Breast epithelium (tissue), 4 donors: ENCODE measurements at regions of chr17 and their contacts with region 1.

Region 1: DNA sequence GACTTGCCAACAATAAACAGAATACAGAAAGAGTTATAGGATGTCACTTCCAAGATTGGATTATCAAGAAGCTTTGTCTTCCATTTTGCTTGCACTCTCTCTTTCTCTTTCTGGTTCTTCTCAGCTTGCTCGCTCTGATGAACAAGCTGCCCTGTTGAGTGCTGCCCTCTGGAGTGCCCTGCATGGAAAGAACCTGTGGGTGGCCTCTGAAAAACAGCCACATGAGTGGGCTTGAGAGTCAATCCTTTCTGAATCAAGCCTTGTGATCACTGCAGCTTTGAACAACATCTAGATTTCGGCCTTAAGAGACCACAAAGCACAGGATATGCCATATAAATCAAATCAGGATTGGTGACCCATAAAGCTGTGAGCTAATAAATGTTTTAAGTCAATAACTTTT is 185.1 kb downstream of the KIF2B start:
- DNase-seq: no peak
- H3K4me3 ChIP-seq: no peak overlapping the region
- H3K27ac ChIP-seq: no peak overlapping the region
- H3K4me1 ChIP-seq: no peaks in the 10 kb centered on the region
- H3K27me3 ChIP-seq: no peaks in the 10 kb centered on the region
- CTCF ChIP-seq: no peak
- POLR2A ChIP-seq: no peak

Region 2: DNA sequence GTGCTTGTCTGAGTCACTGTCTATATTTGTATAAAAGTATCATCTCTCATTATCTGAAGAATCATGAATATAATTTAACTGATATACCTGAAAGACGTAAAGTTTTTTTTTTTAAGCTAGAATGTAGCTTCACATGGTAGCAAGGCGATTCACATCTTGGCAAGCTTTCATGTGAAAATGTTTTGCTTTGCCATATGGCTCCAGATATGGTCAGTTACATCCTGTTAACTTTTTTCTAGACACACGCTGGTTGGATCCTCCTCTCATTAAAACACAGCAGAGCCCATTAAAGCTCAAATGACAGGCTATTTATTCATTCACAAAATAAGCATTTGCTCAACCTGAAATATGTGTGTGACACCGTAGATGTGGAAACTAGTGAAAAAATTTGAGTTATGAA is 227.7 kb after region 1 on chr17:
- intact Hi-C with region 1: loop called (anchors 5 kb)
- DNase-seq: no peak
- H3K4me3 ChIP-seq: no peak overlapping the region
- H3K27ac ChIP-seq: no peak overlapping the region
- H3K4me1 ChIP-seq: no peaks in the 10 kb centered on the region
- H3K27me3 ChIP-seq: no peaks in the 10 kb centered on the region
- CTCF ChIP-seq: no peak
- POLR2A ChIP-seq: no peak

Region 3: DNA sequence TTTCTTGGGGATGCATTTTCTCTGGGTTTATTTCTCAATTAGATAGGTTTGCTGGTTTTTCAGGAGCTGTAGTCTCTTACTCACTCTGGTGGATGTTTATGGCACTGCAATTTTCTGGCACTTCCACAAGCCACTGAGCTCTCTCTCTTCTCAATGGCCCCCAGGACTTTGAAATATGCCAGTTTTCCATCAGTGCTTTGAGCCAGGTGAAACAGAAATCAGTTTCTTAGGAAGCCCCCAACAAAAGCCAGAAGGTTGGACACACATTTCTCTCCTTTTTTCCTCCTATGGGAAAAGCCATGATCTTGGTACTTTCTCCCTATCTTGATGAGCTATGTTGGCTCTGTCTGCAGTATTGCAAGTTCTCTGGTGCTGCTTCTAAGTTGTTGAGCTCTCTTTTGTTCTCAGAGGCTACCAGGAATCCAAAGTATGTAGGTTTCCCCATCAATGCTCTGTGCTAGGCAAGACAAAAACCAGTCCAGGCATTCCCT is 1594.1 kb after region 1 on chr17:
- intact Hi-C with region 1: no loop called
- DNase-seq: no peak
- H3K4me3 ChIP-seq: no peak overlapping the region
- H3K27ac ChIP-seq: no peak overlapping the region
- H3K4me1 ChIP-seq: no peaks in the 10 kb centered on the region
- H3K27me3 ChIP-seq: no peaks in the 10 kb centered on the region
- CTCF ChIP-seq: peak in 2 of 3 donors; percentile 17 to 48
- POLR2A ChIP-seq: no peak